Activated naive CD4-positive, alpha-beta T cell treated with anti-CD3 and anti-CD28 coated beads for 36 hours (primary cell): ENCODE measurements at regions of chr1 and their contacts with region 1.

Region 1: GRCh38 chr1:168466092-168466713 is 77.6 kb downstream of the XCL2 start:
- DNase-seq: peak; percentile 72
- H3K4me3 Mint-ChIP-seq: no peak overlapping the region
- H3K27ac Mint-ChIP-seq: peak overlapping the region; percentile 32
- H3K4me1 Mint-ChIP-seq: peaks cover 51% of the 10 kb centered on the region
- H3K27me3 Mint-ChIP-seq: no peaks in the 10 kb centered on the region

Region 2: GRCh38 chr1:168509875-168510791 is 43.9 kb after region 1 on chr1:
- CTCF ChIA-PET with region 1: no interaction called
- intact Hi-C with region 1: loop called (anchors 5 kb)
- DNase-seq: no peak
- H3K4me3 Mint-ChIP-seq: no peak overlapping the region
- H3K27ac Mint-ChIP-seq: no peak overlapping the region
- H3K4me1 Mint-ChIP-seq: peaks cover 30% of the 10 kb centered on the region
- H3K27me3 Mint-ChIP-seq: no peaks in the 10 kb centered on the region

Region 3: DNA sequence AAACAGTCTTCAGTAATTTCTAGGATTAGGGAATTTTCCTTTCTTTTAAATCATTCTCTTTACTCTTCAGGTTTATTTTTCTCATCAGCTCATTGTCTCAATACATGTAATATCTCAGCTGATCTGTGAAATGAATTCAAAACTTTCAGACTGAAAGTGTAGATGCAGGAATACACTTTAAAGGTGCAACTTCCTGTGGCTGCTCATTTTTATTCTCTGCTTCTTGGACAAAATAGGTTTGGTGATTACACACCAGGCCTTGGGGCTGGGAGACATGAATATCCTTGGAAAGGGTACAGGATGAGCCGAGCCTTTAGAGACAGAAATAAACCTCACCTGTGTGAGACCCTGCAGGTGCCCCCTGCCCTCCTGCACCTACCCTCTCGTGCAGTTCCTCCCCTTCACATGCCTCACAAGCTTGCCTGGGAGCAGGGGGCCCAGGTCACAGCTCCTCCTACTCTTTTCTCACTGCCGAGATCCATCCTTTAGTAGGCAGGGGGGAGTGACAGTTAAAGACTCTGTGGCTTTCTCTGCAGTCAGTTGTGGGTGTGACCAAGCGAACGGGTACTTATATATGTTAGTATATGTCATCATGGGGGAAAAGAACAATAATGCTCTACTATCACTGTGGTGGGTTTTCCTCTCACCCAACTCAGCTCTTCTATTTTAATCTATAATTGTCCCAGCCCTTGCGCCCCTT is 54.0 kb after region 1 on chr1:
- CTCF ChIA-PET with region 1: no interaction called
- intact Hi-C with region 1: loop called (anchors 1 kb)
- DNase-seq: peak; percentile 59
- H3K4me3 Mint-ChIP-seq: peak overlapping the region; percentile 34
- H3K27ac Mint-ChIP-seq: peak overlapping the region; percentile 74
- H3K4me1 Mint-ChIP-seq: peaks cover 39% of the 10 kb centered on the region
- H3K27me3 Mint-ChIP-seq: no peaks in the 10 kb centered on the region